Activated naive CD4-positive, alpha-beta T cell treated with anti-CD3 and anti-CD28 coated beads, Interleukin-2, amount 10 ng/mL, durations not matched to agents 7 days and 5 days (primary cell): ENCODE measurements at regions of chr11 and their contacts with region 1.

Region 1: DNA sequence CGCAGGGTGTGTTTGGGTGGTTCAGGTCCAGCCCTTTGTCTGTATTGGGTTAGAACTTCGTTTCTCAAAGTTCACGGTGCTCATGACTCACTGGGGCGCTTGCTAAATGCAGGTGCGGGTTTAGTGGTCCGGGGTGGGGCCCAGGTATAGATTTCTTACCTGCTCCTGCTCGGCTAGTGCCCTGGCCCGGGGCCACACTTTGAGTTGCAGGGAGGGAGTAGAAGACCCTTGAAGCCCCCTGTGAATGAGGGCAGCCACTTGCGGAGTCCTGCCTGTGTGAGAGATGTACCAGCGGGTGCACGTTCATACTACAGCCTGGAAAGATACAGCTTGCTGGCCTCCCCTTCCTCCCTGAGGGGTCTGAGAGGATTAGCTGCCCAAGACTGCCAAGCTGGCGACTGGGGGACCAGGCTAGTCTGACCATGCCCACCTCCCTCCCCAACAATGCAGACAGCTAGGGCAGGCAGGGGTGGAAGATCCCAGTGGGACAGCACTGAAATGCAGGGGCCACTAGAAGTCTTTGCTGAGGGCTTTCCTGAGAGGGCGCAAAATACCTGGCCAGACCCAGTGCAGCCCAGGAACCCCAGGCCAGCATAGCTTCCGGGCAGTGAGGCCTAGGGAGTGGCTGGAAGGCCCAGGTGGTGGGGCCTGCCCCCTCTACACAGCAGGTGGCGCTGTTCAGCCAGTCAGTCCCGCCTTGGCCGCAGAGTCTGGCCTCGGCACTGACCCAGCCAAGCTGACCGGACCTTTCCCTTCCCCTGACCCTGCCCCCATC is 5.1 kb upstream of the MYRF start:
- DNase-seq: peak; percentile 68
- H3K4me3 Mint-ChIP-seq: no peak overlapping the region
- H3K27ac Mint-ChIP-seq: no peak overlapping the region
- H3K4me1 Mint-ChIP-seq: peaks cover 2% of the 10 kb centered on the region
- H3K27me3 Mint-ChIP-seq: peaks cover 42% of the 10 kb centered on the region

Region 2: GRCh38 chr11:61061081-61061826 is 686.1 kb before region 1 on chr11:
- CTCF ChIA-PET with region 1: no interaction called
- DNase-seq: peak; percentile 91
- H3K4me3 Mint-ChIP-seq: peak overlapping the region; percentile 80
- H3K27ac Mint-ChIP-seq: peak overlapping the region; percentile 97
- H3K4me1 Mint-ChIP-seq: peaks cover 83% of the 10 kb centered on the region
- H3K27me3 Mint-ChIP-seq: no peaks in the 10 kb centered on the region

Region 3: DNA sequence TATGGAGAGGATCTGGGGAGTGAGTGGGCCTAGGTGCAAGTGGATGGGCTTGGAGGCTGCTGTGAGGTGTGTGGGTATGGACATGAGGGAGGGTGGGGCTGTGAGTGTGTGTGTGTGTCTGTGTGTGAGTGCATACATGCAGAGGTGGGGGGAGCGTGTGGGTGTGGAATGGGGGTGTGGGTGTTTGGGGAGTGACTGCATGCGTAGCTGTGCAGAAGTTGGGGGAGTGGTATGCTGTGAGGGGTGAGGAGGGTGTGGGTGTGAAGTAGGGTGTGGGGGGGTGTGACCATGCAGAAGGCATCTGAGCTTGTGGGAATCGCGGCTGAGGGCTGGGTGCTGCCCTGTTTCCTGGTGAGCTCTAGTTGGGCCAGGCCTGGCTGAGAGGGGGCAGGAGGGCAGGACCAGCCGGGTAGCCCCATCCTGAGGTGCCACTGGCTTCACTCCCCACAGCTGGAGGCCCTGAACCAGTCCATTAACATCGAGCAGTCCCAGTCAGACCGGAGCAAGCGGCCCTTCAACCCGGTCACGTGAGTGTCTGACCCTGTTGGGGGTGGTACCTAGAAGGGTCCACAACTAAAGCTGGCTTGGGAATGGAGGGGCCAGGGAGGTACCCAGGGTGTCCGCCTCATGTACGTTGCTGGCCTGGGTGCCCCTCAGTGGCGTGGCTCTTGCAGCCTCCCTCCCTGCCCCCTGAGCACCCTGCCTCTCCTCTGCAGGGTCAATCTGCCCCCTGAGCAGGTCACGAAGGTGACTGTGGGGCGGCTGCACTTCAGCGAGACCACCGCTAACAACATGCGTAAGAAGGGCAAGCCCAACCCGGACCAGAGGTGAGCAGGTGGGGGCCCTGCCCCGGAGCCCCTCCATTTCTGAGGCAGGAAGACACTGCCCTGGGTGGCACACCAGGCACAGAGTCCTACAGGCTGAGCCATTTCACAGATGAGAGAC is 28.5 kb after region 1 on chr11:
- CTCF ChIA-PET with region 1: interaction called, 10 read pairs
- DNase-seq: no peak
- H3K4me3 Mint-ChIP-seq: peak overlapping the region; percentile 43
- H3K27ac Mint-ChIP-seq: no peak overlapping the region
- H3K4me1 Mint-ChIP-seq: peaks cover 42% of the 10 kb centered on the region
- H3K27me3 Mint-ChIP-seq: peaks cover 37% of the 10 kb centered on the region

Region 4: DNA sequence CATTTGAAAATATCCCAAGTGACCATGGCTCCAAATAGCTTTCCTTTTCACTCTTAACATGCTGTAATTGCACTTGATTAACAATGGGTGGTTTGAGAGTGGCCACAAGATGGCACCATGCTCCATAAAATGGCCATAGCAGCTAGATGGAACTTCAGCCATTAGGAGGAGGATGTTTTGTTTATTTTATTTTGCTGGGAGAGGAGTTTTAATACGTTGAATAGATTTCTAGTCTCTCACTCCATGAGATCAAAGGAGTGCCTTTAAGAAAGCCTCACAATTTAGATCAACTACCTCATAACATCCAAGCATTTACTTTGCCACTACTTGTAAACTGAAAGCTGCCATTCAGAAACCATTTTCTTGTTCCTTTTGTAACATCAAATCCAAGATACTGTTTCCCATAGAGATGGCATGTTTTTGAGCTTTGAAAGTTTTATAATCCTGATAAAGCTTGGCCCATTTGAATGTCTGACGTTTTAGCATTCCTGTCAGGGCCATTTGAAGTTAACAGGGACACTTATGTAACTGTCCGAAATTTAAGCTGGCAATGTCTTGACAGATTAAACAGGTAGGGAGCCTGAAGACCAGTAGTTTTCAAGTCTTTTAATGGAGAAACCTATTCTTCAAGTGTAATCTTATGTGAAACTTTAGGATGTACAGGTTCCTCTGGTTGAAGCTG is 50.0 kb after region 1 on chr11:
- CTCF ChIA-PET with region 1: no interaction called
- DNase-seq: peak; percentile 88
- H3K4me3 Mint-ChIP-seq: no peak overlapping the region
- H3K27ac Mint-ChIP-seq: peak overlapping the region; percentile 11
- H3K4me1 Mint-ChIP-seq: peaks cover 59% of the 10 kb centered on the region
- H3K27me3 Mint-ChIP-seq: no peaks in the 10 kb centered on the region